HCT116 (cell line): ENCODE measurements at regions of chr2 and their contacts with region 1.

Region 1: DNA sequence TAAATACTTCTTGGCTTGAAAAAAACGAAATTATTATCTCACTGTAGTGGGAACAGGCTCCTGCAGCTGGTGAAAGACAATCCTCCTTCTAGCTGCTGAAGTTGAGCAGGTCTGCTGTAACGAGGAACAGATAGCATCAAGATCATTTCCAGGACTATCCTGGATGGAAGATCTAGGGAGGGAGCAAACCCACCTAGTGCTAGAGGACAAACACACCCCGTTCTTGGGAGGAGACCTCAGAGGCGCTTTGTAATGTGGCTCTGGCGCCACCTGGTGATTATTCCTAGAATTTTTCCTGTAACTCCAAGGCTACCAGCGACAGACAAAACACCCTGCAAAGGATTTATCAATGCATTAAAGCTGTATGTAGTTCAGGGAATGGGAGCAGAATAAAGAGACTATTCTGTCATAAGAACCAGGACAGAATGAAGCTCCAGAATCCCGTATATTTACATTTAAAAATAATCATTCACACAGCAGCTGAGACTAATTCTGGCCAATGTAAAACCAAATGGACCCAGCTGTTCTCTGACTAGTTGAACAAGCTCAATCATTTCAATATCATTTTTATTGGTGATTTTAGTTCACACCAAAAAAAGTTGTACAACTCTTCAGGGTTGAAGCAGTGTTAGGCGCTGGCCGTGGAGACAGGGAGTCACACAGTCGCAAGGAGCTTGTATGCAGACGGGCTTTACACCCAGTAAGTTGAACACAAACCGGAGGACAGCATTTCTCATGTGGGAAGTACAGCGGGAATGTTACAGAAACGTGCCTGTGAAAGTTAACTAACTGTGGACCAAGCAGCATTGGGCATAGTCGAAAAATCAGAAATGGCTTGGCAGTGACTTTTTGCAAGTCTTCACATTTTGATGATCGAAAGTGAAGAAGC is 290.3 kb downstream of the TRIB2 start:
- DNase-seq: peak; percentile 62
- ATAC-seq: peak; percentile 99
- H3K4me3 ChIP-seq: no peak overlapping the region
- H3K27ac ChIP-seq: no peak overlapping the region
- H3K4me1 ChIP-seq: peaks cover 0 to 3% of the 10 kb centered on the region in 2 experiments; a peak in 2 of 4 replicates
- H3K27me3 ChIP-seq: no peaks in the 10 kb centered on the region
- CTCF ChIP-seq: peak; percentile 61 to 84 (median 72); a peak in 5 of 6 replicates
- POLR2A ChIP-seq: no peak
- RAD21 ChIP-seq: peak; percentile 91

Region 2: GRCh38 chr2:11778923-11779757 is 1227.9 kb before region 1 on chr2:
- CTCF ChIA-PET with region 1: interaction called, 6 read pairs
- POLR2A ChIA-PET with region 1: no interaction called
- RAD21 ChIA-PET with region 1: interaction called in 1 of 2 experiments, 3 read pairs
- intact Hi-C with region 1: loop called (anchors 2 kb)
- DNase-seq: peak; percentile 34
- ATAC-seq: peak; percentile 100
- H3K4me3 ChIP-seq: 0 out of 4 replicates have a peak overlapping the region, but pooled peaks of 1 of the 2 experiments have one; percentile 28
- H3K27ac ChIP-seq: no peak overlapping the region
- H3K4me1 ChIP-seq: peaks cover 0 to 11% of the 10 kb centered on the region in 2 experiments; a peak in 3 of 4 replicates
- H3K27me3 ChIP-seq: no peaks in the 10 kb centered on the region
- CTCF ChIP-seq: peak; percentile 87 to 96 (median 96)
- POLR2A ChIP-seq: no peak
- RAD21 ChIP-seq: peak; percentile 98

Region 3: GRCh38 chr2:11863513-11864328 is 1143.4 kb before region 1 on chr2:
- CTCF ChIA-PET with region 1: interaction called, 4 read pairs
- POLR2A ChIA-PET with region 1: no interaction called
- RAD21 ChIA-PET with region 1: no interaction called
- intact Hi-C with region 1: loop called (anchors 10 kb)
- DNase-seq: peak; percentile 71
- ATAC-seq: peak; percentile 98
- H3K4me3 ChIP-seq: no peak overlapping the region
- H3K27ac ChIP-seq: no peak overlapping the region
- H3K4me1 ChIP-seq: peaks cover 0 to 11% of the 10 kb centered on the region in 2 experiments; a peak in 2 of 4 replicates
- H3K27me3 ChIP-seq: no peaks in the 10 kb centered on the region
- CTCF ChIP-seq: peak; percentile 63 to 97 (median 94); a peak in 5 of 6 replicates
- POLR2A ChIP-seq: no peak
- RAD21 ChIP-seq: peak; percentile 89

Region 4: DNA sequence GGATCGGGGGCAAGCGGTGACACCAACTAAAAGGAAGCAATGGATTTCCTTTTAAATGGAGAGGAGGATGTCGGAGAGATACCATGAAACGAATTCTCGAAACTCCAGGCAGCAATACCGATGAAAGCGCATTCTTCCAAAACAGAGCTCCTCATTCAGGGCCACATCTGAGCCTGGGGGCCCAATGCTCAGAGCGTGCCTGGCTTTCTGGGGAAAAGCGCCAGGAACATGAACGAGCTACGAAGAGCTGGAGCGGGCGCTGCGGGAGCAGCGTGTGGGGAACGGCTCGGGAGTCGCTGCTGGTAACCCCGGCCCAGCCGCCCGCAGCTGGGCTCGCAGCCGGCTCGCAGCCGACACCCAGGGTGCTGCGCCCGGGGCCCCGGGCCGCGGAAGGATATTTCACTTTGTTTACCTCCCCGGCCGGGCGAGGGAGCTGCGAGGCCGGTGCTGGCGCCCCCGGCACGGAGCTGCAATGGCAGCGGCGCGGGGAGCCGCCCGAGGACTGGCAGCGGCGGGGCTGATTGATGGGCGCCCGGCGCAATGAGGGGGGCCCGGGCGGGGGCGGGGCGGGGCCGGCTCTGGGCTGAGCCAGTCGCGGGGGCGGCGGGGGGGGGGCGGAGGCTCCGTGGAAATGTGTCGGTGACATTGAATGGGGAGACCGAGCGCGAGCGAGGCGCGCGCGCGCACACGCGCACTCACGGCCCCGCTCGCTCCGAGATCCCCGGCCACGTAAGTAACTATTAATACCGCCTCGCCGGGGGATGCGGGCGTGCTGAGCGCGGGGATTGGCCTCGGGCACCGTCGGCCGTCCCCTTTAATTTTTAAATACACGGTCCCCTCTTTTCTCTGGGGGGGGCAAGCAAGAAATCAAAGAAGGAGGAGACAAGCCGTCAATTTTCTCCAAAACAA is 290.5 kb before region 1 on chr2 and contains the start of gene TRIB2:
- CTCF ChIA-PET with region 1: interaction called, 26 read pairs
- POLR2A ChIA-PET with region 1: no interaction called
- RAD21 ChIA-PET with region 1: interaction called, 5 to 7 read pairs
- intact Hi-C with region 1: loop called (anchors 5 kb)
- DNase-seq: peak; percentile 61
- ATAC-seq: peak; percentile 85
- H3K4me3 ChIP-seq: peak within 1 kb of the TSS; percentile 66 to 78
- H3K27ac ChIP-seq: peak within 1 kb of the TSS; percentile 70
- H3K4me1 ChIP-seq: peaks cover 18 to 29% of the 10 kb centered on the region in 2 experiments
- H3K27me3 ChIP-seq: no peaks in the 10 kb centered on the region
- CTCF ChIP-seq: no peak
- POLR2A ChIP-seq: no peak
- RAD21 ChIP-seq: peak; percentile 38; the same call in 1 of the 2 replicates
- total RNA-seq, gene TRIB2: 12.4 TPM

Region 5: DNA sequence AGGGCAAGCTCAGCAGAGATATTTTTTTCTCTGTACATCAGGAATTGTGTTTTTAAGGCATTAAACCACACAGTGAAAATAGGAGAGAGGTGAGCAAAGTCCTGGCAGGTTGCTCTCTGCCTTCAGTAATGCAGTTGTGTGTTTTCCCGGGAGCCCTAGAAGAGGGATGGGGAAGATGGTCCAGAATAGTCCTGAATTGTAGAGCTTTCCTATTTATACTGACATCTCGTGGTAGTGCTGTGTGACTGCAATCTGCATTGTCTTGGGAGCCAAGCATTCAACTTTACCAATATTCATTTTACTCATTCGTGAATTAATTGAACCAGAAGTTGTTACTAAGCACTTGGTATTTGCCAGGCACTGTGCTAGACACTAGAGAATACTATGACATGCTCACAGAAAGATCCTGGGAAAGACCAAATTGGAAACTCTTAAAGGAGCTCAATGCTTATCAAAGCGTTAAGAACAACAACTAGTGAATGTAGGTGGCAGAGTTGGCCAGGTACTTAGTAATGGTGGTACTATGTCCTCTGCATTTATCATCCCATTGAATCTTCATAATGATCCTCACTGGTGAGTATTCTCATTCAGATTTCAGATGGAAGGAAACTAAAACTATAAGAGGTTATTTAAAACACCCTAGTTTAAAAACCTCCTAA is 75.8 kb before region 1 on chr2:
- CTCF ChIA-PET with region 1: interaction called, 13 read pairs
- POLR2A ChIA-PET with region 1: no interaction called
- RAD21 ChIA-PET with region 1: interaction called in 1 of 2 experiments, 3 read pairs
- intact Hi-C with region 1: loop called (anchors 5 kb)
- DNase-seq: peak; percentile 28
- ATAC-seq: peak; percentile 95
- H3K4me3 ChIP-seq: no peak overlapping the region
- H3K27ac ChIP-seq: no peak overlapping the region
- H3K4me1 ChIP-seq: peaks cover 0 to 8% of the 10 kb centered on the region in 2 experiments; a peak in 2 of 4 replicates
- H3K27me3 ChIP-seq: no peaks in the 10 kb centered on the region
- CTCF ChIP-seq: peak; percentile 55 to 74 (median 72); a peak in 5 of 6 replicates
- POLR2A ChIP-seq: no peak
- RAD21 ChIP-seq: peak; percentile 76